WTC11 (cell line): ENCODE measurements at regions of chr10 and their contacts with region 1.

Region 1: DNA sequence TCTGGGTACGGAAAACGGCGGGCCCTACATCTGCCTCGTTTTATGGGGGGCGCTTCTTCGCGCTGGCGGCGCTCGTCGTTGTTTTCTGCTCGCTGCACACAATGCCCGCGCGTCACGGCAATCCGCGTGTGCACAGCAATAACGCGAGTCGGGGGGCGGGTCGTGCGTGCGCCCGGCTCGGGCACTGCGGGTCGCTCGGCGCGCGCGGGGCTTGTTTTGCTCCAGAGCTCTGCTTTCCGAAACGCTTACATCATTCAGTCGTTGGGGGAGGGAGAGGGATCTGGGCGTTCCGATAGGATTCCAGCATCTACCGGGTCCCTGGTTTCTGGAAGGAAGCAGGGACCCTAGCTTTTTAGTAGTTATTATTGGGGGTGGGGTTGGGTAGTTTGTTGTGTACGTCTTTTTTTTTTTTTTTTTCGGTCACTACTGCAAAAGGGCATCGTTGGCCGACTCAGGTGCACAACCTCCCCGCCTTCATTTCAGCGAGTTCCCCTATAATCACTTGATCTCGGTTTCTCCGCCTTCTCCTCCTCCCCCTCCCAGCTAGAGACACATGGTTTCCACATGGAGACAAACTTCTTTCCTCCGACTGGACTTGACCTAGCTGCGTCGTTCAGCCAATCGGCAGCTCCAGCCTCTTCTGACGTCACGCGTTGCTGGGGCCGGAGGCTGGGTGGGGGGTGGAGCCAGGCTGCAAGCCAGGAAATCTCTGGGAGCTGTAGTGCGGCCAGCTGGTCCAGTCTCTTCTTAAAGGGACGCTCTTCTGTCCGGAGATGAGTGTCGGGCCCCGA is 3.5 kb downstream of the MXI1 start:
- DNase-seq: peak; percentile 98
- ATAC-seq: peak; percentile 76
- H3K4me3 Mint-ChIP-seq: peak overlapping the region; percentile 81
- H3K27ac Mint-ChIP-seq: peak overlapping the region; percentile 94
- H3K4me1 Mint-ChIP-seq: peaks cover 40% of the 10 kb centered on the region
- H3K27me3 Mint-ChIP-seq: peaks cover 71% of the 10 kb centered on the region
- CTCF ChIP-seq: no peak

Region 2: DNA sequence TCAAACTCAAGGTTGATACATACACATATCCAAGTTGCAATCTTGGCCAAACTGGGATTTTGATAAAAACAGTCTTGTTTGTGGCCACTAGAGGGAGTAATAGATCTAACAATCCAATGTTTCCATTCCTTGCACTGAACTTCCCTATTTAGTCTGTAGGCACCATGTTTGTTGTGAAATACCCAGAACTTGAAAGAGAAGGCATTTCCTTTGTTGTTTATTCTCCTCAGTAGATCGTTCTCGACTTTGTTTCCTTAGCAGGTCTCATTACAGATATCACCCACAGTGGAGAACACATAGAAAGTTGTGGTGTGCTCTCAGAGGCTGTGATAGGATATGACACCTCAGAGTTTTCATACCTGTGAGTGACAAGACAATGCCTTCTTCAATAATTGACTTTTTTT is 73.7 kb before region 1 on chr10:
- CTCF ChIA-PET with region 1: interaction called, 19 read pairs
- POLR2A ChIA-PET with region 1: interaction called, 4 read pairs
- DNase-seq: no peak
- ATAC-seq: peak; percentile 67
- H3K4me3 Mint-ChIP-seq: no peak overlapping the region
- H3K27ac Mint-ChIP-seq: peak overlapping the region; percentile 25; the same call in 1 of the 2 replicates
- H3K4me1 Mint-ChIP-seq: 0 out of 2 replicates have a peak, but pooled peaks cover 3% of the 10 kb centered on the region
- H3K27me3 Mint-ChIP-seq: no peaks in the 10 kb centered on the region
- CTCF ChIP-seq: peak; percentile 60

Region 3: DNA sequence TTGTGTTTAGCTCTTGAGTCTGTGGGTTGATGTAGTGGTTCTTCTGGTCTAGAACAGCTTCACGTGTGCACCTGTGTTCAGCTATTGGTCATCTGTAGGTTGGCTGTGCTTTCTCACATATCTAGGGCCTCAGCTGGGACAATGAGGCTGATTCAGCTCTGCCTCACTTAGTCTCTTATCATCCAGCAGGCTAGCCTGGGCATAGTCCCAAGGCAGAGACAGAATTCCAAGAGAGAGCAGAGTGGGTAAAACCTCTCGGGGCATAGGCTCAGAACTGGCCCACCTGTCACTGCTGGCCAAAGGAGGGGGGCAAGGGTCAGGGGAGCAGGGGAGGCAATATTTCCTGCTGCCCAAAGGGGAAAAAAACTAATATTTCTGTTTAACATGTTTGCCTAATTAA is 35.5 kb before region 1 on chr10:
- CTCF ChIA-PET with region 1: interaction called, 10 read pairs
- POLR2A ChIA-PET with region 1: interaction called, 3 read pairs
- DNase-seq: no peak
- ATAC-seq: no peak
- H3K4me3 Mint-ChIP-seq: no peak overlapping the region
- H3K27ac Mint-ChIP-seq: no peak overlapping the region
- H3K4me1 Mint-ChIP-seq: peaks cover 38% of the 10 kb centered on the region
- H3K27me3 Mint-ChIP-seq: peaks cover 90% of the 10 kb centered on the region
- CTCF ChIP-seq: no peak

Region 4: DNA sequence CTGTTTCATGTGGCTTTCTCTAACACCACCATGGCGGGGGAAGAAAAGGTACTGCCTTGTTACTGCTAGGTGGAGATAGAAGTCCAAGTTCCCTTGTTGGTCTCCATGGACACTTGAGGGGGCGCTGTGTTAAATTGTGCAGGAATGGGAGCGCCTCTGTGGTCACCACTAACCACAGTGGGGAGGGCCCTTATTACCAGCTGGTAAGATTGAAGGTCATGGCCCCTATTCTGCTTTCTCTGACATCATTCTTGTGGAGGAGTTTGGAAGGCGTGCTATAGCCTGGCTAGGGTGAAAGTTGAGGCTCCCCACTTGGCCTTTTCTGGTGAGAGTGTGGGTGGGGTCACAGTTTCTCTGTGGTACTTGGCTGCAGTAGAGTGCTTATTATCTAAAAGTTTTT is 18.3 kb before region 1 on chr10:
- CTCF ChIA-PET with region 1: interaction called, 17 read pairs
- POLR2A ChIA-PET with region 1: interaction called, 4 read pairs
- DNase-seq: peak; percentile 48
- ATAC-seq: peak; percentile 95
- H3K4me3 Mint-ChIP-seq: no peak overlapping the region
- H3K27ac Mint-ChIP-seq: no peak overlapping the region
- H3K4me1 Mint-ChIP-seq: no peaks in the 10 kb centered on the region
- H3K27me3 Mint-ChIP-seq: peaks cover 47% of the 10 kb centered on the region
- CTCF ChIP-seq: peak; percentile 62

Region 5: DNA sequence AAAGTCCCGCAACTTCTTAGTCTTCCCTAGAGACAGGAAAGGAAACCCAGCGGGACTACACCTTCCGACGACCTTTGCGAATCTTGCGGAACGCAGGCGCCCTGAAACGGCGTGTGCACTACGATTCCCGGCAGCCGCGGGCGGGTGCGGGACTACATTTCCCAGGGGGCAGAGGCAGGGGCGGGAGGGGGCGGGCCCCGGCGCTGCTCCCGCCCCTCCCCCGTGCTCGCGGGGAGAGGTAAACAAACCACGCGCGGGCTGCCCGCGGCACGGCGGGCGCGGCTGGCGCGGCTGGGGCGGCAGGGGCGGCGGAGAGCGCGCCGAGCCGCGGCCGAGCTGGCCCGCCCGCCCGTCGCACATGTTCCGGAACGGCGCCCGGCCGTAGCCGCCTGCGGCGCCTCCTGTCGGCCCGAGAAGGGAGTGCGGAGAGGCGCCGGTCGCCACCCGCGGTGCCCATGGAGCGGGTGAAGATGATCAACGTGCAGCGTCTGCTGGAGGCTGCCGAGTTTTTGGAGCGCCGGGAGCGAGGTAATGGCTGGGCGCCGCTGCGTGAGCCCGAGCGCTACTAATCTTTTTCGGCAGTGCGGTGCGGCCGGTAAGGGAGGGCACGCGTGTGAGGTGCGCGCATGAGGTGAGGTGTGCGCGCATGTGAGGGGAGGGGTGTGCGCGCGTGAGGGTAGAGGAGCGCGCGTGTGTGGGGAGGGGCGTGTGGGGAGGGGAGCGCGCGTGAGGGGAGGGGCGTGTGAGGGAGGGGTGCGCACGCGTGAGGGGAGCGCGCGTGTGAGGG is 15.1 kb after region 1 on chr10:
- CTCF ChIA-PET with region 1: interaction called, 69 read pairs
- POLR2A ChIA-PET with region 1: interaction called, 101 read pairs
- DNase-seq: peak; percentile 90
- ATAC-seq: peak; percentile 65
- H3K4me3 Mint-ChIP-seq: peak overlapping the region; percentile 96
- H3K27ac Mint-ChIP-seq: peak overlapping the region; percentile 98
- H3K4me1 Mint-ChIP-seq: peaks cover 40% of the 10 kb centered on the region
- H3K27me3 Mint-ChIP-seq: peaks cover 27% of the 10 kb centered on the region
- CTCF ChIP-seq: peak; percentile 56

Region 6: DNA sequence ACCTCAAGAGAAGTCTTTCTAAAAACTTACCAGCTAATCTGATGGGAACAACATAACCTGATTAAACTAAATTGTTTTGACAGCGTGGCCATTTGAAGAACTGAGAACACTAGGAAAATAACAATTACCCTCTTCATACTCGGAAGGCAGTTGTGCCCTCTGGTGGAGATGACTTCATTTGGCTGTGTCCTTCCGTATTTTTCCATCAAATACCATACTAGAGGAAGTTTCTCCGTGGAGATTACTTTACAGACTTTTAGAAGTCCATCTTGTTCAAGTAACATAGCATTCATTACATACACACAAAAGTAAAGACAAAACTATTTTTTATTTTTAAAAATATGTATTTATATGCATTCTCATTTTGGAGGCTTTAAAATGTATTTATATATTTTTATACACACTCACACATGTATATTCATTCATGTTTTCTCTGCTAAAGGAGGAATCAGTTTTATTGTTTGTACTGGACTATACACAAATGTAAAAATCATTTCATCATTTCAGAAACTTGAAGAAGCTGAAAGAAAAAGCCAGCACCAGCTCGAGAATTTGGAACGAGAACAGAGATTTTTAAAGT is 68.6 kb after region 1 on chr10:
- CTCF ChIA-PET with region 1: interaction called, 17 read pairs
- POLR2A ChIA-PET with region 1: interaction called, 3 read pairs
- DNase-seq: peak; percentile 20
- ATAC-seq: peak; percentile 64
- H3K4me3 Mint-ChIP-seq: no peak overlapping the region
- H3K27ac Mint-ChIP-seq: peak overlapping the region; percentile 45; the same call in 1 of the 2 replicates
- H3K4me1 Mint-ChIP-seq: peaks cover 12% of the 10 kb centered on the region
- H3K27me3 Mint-ChIP-seq: no peaks in the 10 kb centered on the region
- CTCF ChIP-seq: no peak

Region 7: DNA sequence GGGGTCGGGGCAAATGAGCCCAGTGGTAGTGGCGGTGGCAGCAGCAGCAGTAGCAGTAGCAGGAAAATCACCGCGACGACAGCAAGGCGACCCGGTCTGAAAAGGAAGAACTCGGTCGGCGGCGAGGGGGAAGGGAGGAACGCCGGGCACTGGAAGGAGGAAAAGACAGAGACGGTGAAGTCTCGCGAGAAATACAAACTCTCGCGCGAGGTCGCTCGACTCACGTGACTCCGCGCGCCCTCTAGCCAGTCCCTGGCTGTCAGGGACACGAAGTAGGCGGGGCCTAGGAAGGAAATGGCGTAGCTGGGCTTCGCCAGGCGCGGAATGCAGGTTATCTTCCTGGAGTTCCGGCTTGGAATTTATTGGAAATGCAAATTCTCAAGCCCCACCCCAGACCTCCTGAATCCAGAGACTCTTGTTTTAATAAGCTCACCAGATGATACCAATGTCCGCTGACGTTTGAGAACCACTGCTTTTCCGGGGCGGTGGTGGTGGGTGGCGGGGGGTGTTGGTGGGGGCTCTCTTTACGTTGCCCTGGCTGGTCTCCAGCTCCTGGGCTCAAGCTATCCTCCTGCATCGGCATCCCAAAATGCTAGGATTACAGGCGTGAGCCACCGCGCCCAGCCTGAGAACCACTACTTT is 94.0 kb after region 1 on chr10 and contains the start of gene SMNDC1:
- CTCF ChIA-PET with region 1: interaction called, 7 read pairs
- POLR2A ChIA-PET with region 1: interaction called, 11 read pairs
- DNase-seq: peak; percentile 99
- ATAC-seq: peak; percentile 95
- H3K4me3 Mint-ChIP-seq: peak within 1 kb of the TSS; percentile 95
- H3K27ac Mint-ChIP-seq: peak within 1 kb of the TSS; percentile 99
- H3K4me1 Mint-ChIP-seq: peaks cover 33% of the 10 kb centered on the region
- H3K27me3 Mint-ChIP-seq: no peaks in the 10 kb centered on the region
- CTCF ChIP-seq: no peak
- total RNA-seq, gene SMNDC1: 37.7 to 55.9 TPM (median 40.2 TPM) in 3 replicates

Region 8: DNA sequence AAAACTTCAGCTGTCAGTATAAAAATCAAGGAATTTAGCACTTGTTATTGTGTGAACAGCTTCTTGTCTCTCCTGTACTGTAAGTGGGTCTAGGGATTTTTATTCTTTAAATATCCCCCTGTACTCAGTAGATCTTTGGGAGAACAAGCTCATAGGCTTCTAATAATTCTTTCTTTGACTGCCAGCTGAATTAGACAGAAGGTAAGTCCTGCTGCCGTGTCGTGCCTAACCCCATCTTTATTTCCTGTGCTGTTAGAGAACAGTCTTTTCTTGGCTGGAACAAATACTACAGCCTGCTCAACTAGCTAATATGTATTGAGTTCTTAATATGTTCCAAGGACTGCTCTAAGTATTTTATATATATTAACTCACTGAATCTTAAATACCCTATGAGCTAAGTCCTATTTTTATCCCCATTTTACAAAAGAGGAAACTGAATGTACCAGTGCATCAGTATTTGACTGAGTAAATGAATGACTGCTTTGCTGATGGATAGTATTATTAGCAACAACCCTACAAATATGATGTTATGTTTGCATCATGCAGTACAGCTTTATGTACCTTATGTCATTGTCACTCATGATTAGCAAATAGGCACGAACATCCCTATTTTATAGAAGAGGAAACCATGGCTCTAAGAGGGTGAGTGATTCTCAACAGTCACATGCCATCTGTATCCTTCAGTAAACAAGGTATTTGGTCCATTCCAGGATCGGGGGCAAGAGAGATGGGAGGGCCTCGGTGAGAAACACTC is 281.4 kb after region 1 on chr10:
- CTCF ChIA-PET with region 1: no interaction called
- POLR2A ChIA-PET with region 1: no interaction called
- DNase-seq: no peak
- ATAC-seq: no peak
- H3K4me3 Mint-ChIP-seq: no peak overlapping the region
- H3K27ac Mint-ChIP-seq: no peak overlapping the region
- H3K4me1 Mint-ChIP-seq: peaks cover 81% of the 10 kb centered on the region
- H3K27me3 Mint-ChIP-seq: peaks cover 6% of the 10 kb centered on the region
- CTCF ChIP-seq: no peak